ENCODE measurements at regions of chr3 and their contacts with region 1.

Region 1: GRCh38 chr3:169149349-169149890 is 514.1 kb downstream of the MECOM start:
- DNase-seq: peak; percentile 3
- H3K4me3 ChIP-seq: peak overlapping the region; percentile 8 to 53 (median 32)
- H3K27ac ChIP-seq: peak overlapping the region; percentile 20 to 88 (median 66)
- H3K4me1 ChIP-seq: peaks cover 0 to 54% (median 17%) of the 10 kb centered on the region in 3 donors
- H3K27me3 ChIP-seq: peaks cover 0 to 44% (median 4%) of the 10 kb centered on the region in 4 donors
- CTCF ChIP-seq: peak; percentile 21 to 96 (median 90)
- POLR2A ChIP-seq: no peak

Region 2: GRCh38 chr3:169195672-169196071 is 46.3 kb after region 1 on chr3:
- intact Hi-C with region 1: no loop called
- DNase-seq: no peak
- H3K4me3 ChIP-seq: no peak overlapping the region
- H3K27ac ChIP-seq: no peak overlapping the region
- H3K4me1 ChIP-seq: no peaks in the 10 kb centered on the region
- H3K27me3 ChIP-seq: no peaks in the 10 kb centered on the region
- CTCF ChIP-seq: no peak
- POLR2A ChIP-seq: no peak

Region 3: GRCh38 chr3:169662132-169662842 is 512.9 kb after region 1 on chr3:
- intact Hi-C with region 1: loop called (anchors 5 kb)
- DNase-seq: no peak
- H3K4me3 ChIP-seq: peak overlapping the region; percentile 69 to 91 (median 84)
- H3K27ac ChIP-seq: peak overlapping the region; percentile 90 to 95 (median 94)
- H3K4me1 ChIP-seq: peaks cover 4 to 69% (median 35%) of the 10 kb centered on the region in 3 donors
- H3K27me3 ChIP-seq: peaks cover 4 to 100% (median 9%) of the 10 kb centered on the region in 4 donors
- CTCF ChIP-seq: peak in 5 of 6 experiments; percentile 49 to 68 (median 58)
- POLR2A ChIP-seq: no peak